ENCODE measurements at regions of chrX and their contacts with region 1.

Region 1: GRCh38 chrX:20530406-20530921 is 263.8 kb upstream of the RPS6KA3 start:
- DNase-seq: peak; percentile 41
- H3K4me3 ChIP-seq: no peak overlapping the region
- H3K27ac ChIP-seq: no peak overlapping the region
- H3K4me1 ChIP-seq: peaks cover 8% of the 10 kb centered on the region
- H3K27me3 ChIP-seq: peaks cover 11 to 14% of the 10 kb centered on the region in 2 experiments
- CTCF ChIP-seq: peak; percentile 41 to 43
- POLR2A ChIP-seq: no peak

Region 2: DNA sequence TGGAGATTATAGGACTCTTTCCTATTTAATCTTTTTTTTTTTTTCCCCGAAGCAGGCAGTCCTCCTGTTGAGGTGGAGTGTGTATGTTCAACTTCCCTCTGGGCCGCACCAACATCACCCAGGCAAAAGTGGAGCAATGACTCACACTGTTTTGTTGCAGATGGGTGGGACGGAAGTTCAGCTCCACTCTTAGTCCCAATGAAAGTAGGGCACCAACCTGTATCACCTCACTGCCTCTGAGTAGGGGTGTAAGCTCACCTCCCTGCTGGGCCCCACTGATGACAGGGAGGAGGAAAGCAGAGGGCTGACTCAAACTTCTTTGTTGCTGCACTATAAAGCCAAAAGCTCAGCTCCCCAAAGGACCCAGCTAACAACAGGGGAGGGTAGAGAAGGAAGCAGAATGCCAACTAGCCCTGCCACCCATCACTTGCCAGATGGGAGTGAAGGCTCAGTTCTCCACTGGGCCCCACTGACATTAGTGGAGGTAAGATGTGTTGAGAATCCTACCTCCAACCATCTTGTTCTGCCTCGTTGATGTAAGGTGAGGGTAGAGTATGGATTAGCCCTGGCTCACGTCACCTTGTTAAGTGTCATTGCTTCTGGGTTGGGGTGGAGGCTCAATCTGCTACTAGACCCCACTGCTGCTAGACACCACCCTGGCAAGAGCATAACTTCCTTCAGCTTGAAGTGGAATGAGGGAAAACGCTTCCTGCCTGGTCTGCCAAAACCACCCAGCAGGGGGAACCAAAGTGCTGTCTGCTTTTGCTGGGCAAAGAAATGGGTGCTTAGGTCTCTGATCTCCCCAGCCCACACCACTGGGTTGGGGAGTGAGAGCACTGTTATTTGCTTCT is 277.9 kb before region 1 on chrX:
- CTCF ChIA-PET with region 1: interaction called, 11 read pairs
- POLR2A ChIA-PET with region 1: no interaction called
- dilution Hi-C with region 1: no loop called
- intact Hi-C with region 1: loop called (anchors 1 kb)
- DNase-seq: peak; percentile 61
- H3K4me3 ChIP-seq: no peak overlapping the region
- H3K27ac ChIP-seq: no peak overlapping the region
- H3K4me1 ChIP-seq: no peaks in the 10 kb centered on the region
- H3K27me3 ChIP-seq: no peaks in the 10 kb centered on the region
- CTCF ChIP-seq: peak; percentile 55 to 67
- POLR2A ChIP-seq: no peak

Region 3: GRCh38 chrX:20500171-20500865 is 30.1 kb before region 1 on chrX:
- CTCF ChIA-PET with region 1: no interaction called
- POLR2A ChIA-PET with region 1: no interaction called
- dilution Hi-C with region 1: no loop called
- intact Hi-C with region 1: no loop called
- DNase-seq: no peak
- H3K4me3 ChIP-seq: no peak overlapping the region
- H3K27ac ChIP-seq: no peak overlapping the region
- H3K4me1 ChIP-seq: no peaks in the 10 kb centered on the region
- H3K27me3 ChIP-seq: peaks cover 0 to 5% of the 10 kb centered on the region in 2 experiments
- CTCF ChIP-seq: no peak
- POLR2A ChIP-seq: no peak

Region 4: GRCh38 chrX:21479695-21480270 is 949.3 kb after region 1 on chrX:
- CTCF ChIA-PET with region 1: interaction called, 48 read pairs
- POLR2A ChIA-PET with region 1: no interaction called
- dilution Hi-C with region 1: no loop called
- intact Hi-C with region 1: loop called (anchors 1 kb)
- DNase-seq: peak; percentile 49
- H3K4me3 ChIP-seq: no peak overlapping the region
- H3K27ac ChIP-seq: no peak overlapping the region
- H3K4me1 ChIP-seq: no peaks in the 10 kb centered on the region
- H3K27me3 ChIP-seq: no peaks in the 10 kb centered on the region
- CTCF ChIP-seq: peak; percentile 24 to 39
- POLR2A ChIP-seq: no peak

Region 5: DNA sequence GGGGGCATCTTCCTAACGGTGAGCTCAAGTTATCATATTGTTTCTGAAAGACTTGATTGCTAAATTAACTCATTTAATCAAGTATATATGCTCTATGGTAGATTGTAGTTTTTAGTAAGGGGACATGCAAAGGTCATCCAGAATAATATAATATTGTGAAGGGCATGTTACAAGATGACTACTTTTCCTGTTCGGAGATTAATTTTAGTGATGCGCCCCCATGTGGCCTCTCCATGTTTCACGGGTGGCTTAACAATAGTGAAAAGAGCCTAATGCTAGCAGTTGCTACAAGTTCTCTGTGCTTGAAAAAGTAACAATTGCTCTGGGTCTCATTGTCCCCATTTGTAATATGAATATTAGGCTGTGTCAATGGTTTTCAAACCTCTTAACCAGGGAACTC is 1215.3 kb after region 1 on chrX:
- CTCF ChIA-PET with region 1: interaction called, 18 read pairs
- POLR2A ChIA-PET with region 1: no interaction called
- dilution Hi-C with region 1: no loop called
- intact Hi-C with region 1: loop called (anchors 1 kb)
- DNase-seq: peak; percentile 24
- H3K4me3 ChIP-seq: no peak overlapping the region
- H3K27ac ChIP-seq: no peak overlapping the region
- H3K4me1 ChIP-seq: peaks cover 6% of the 10 kb centered on the region
- H3K27me3 ChIP-seq: peaks cover 0 to 9% of the 10 kb centered on the region in 2 experiments
- CTCF ChIP-seq: peak; percentile 31 to 36
- POLR2A ChIP-seq: no peak

Region 6: DNA sequence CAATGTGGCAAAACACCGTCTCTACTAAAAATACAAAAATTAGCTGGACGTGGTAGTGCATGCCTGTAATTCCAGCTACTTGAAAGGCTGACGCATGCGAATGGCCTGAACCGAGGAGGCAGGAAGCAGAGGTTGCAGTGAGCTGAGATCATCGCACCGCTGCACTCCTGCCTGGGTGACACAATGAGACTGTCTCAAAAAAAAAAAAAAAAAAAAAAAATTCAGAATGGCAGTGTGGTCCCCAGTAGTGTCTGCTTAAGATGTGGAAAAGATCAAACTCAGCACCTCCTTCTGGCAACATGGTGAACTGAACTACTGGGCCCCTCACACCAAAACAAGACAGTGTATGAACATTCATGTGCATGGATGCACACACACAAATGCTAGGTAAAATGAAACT is 1442.3 kb after region 1 on chrX:
- CTCF ChIA-PET with region 1: interaction called, 6 read pairs
- POLR2A ChIA-PET with region 1: no interaction called
- dilution Hi-C with region 1: no loop called
- intact Hi-C with region 1: loop called (anchors 5 kb)
- DNase-seq: peak; percentile 32
- H3K4me3 ChIP-seq: no peak overlapping the region
- H3K27ac ChIP-seq: peak overlapping the region; percentile 41
- H3K4me1 ChIP-seq: peaks cover 7% of the 10 kb centered on the region
- H3K27me3 ChIP-seq: no peaks in the 10 kb centered on the region
- CTCF ChIP-seq: peak in 1 of 2 donors; percentile 17
- POLR2A ChIP-seq: no peak